ENCODE measurements at regions of chr16 and their contacts with region 1.

Region 1: DNA sequence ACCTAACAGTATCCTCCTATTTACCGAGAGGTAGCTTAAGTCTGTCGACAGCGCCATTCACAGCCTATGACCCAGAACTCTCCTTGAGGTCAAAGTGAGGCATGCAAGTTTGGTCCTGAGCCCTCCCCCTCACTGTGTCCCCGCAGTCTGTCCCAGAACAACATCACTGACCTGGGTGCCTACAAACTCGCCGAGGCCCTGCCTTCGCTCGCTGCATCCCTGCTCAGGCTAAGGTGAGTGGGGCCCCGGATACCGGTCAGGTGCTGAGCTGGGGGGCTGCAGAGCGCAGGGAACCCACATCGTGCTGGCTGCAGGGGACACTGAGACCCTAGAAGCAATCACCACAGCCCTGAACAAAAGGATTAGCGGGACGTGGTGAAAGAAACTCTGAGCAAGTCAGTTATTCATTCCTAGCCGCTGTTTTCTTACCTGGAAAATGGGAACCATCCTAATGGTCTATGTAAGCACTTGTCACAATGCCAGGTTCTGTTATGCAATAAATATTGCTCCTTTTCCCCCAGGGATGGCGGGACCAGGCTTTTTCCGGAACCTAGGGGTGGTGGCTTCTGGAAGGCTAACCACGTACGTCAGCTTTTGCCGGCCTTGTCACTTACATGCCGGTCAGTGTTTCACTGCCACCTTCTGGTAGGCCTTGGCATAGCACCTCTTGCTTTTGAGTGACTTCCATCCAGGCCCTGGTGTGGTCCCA is 23.8 kb downstream of the DEXI start:
- DNase-seq: peak; percentile 88
- H3K4me3 ChIP-seq: no peak overlapping the region
- H3K27ac ChIP-seq: no peak overlapping the region
- H3K4me1 ChIP-seq: no peaks in the 10 kb centered on the region
- H3K27me3 ChIP-seq: no peaks in the 10 kb centered on the region
- CTCF ChIP-seq: peak; percentile 89

Region 2: DNA sequence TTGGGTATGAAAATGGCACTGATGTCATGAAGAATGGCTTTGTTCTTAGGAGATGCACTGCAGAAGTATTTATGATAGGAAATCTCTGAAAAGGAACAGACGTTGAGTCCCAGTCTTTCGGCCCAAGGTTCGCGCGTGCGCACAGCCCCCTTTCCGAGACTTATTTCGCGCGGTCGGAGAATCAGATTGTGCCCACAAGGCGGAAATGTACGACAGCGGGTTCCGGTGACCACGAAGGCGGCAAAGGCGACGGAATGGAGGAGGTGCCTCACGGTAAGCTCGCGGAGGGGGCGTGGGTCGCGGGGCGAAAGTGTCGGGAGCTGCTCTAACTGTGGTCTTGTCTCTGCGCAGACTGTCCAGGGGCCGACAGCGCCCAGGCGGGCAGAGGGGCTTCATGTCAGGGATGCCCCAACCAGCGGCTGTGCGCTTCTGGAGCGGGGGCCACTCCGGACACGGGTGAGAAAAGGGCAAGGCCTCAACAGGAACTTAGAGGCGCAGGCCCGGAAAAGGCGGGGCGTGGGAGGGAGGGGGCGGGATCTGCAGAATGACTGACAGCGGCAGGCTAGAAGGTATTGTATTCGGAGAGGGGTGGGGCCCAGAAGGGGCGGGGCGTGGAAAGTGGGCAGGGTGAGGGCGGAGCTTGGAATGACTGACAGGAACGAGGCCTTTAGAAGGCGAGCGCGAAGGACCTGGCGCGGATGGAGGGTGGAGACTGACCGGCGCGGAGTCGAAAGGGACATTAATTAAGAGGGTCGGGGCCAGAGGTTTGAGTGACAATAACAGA is 174.6 kb before region 1 on chr16 and contains the start of gene NUBP1:
- CTCF ChIA-PET with region 1: interaction called, 4 read pairs
- POLR2A ChIA-PET with region 1: no interaction called
- intact Hi-C with region 1: loop called (anchors 5 kb)
- DNase-seq: peak; percentile 96
- H3K4me3 ChIP-seq: peak within 1 kb of the TSS; percentile 57
- H3K27ac ChIP-seq: peak within 1 kb of the TSS; percentile 98
- H3K4me1 ChIP-seq: peaks cover 5% of the 10 kb centered on the region
- H3K27me3 ChIP-seq: no peaks in the 10 kb centered on the region
- CTCF ChIP-seq: no peak
- total RNA-seq, gene NUBP1: 22.9 and 25.2 TPM in 2 replicates

Measured in A673 (cell line).